GM23248 (cell line): ENCODE measurements at regions of chr18 and their contacts with region 1.

Region 1: GRCh38 chr18:67217551-67218166 is 298.9 kb downstream of the DSEL start:
- DNase-seq: peak; percentile 83
- H3K4me3 ChIP-seq: no peak overlapping the region
- H3K27ac ChIP-seq: no peak overlapping the region
- H3K4me1 ChIP-seq: peaks cover 25% of the 10 kb centered on the region; the same call in 1 of the 2 replicates
- H3K27me3 ChIP-seq: no peaks in the 10 kb centered on the region

Region 2: DNA sequence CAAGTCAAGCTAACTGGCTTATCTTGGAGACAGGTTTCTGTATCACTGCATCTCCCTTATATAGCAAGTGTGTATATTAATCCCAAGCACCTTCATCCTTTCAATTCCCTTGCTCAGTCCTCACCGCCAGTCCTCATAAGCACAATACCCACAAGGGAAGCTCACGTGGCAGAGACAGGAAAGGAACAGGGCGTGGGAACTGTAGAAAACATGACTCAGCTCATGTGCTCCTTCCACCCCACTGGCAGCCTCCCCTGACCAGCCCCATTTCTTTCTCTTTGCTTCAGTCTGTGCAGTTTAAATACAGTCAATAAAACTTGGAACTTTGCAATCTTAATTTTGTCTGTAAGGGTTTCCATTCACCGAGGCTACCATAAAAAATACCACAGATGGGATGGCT is 577.2 kb before region 1 on chr18:
- in situ Hi-C with region 1: no loop called
- DNase-seq: no peak
- H3K4me3 ChIP-seq: no peak overlapping the region
- H3K27ac ChIP-seq: no peak overlapping the region
- H3K4me1 ChIP-seq: no peaks in the 10 kb centered on the region
- H3K27me3 ChIP-seq: no peaks in the 10 kb centered on the region

Region 3: GRCh38 chr18:68660354-68661183 is 1442.9 kb after region 1 on chr18:
- in situ Hi-C with region 1: loop called (anchors 10 kb)
- DNase-seq: peak; percentile 73
- H3K4me3 ChIP-seq: no peak overlapping the region
- H3K27ac ChIP-seq: no peak overlapping the region
- H3K4me1 ChIP-seq: no peaks in the 10 kb centered on the region
- H3K27me3 ChIP-seq: no peaks in the 10 kb centered on the region